Right ventricle myocardium inferior (tissue), 1 donor: ENCODE measurements at regions of chr6 and their contacts with region 1.

Region 1: GRCh38 chr6:125314019-125314581 is 12.3 kb upstream of the HDDC2 start:
- DNase-seq: peak; percentile 54
- ATAC-seq: peak; percentile 87

Region 2: GRCh38 chr6:125363039-125363823 is 49.1 kb after region 1 on chr6:
- intact Hi-C with region 1: loop called (anchors 2 kb)
- DNase-seq: peak; percentile 82
- ATAC-seq: peak; percentile 87

Region 3: DNA sequence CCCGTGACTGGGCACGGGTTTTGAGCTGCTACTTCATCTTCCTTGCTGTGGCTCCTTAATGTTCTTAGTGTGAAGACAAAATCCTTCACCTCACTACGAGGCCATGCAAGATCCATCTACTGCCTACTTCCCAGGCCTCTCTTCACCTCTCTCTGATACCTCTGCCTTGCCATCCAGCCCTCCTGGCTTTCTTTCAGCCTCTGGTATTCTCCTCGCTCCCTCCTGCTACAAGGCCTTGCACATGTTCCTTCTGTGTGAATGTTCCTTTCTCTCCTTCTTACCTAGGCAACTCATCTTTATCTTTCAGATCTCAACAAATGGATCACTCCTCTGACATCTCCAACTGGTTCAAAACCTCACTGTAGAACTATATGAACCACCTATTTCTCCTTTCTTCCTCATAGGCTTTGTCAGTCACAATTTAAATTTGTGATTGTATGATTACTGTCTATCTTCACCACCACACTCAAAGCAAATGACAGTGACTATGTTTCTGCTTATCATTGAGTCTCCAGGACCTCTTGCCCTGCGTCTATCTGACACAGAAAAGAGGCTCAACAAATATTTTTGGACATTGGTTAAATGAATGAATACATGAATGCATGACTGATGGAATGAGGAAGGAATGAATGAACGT is 455.2 kb after region 1 on chr6:
- intact Hi-C with region 1: loop called (anchors 1 kb)
- DNase-seq: no peak
- ATAC-seq: no peak

Region 4: DNA sequence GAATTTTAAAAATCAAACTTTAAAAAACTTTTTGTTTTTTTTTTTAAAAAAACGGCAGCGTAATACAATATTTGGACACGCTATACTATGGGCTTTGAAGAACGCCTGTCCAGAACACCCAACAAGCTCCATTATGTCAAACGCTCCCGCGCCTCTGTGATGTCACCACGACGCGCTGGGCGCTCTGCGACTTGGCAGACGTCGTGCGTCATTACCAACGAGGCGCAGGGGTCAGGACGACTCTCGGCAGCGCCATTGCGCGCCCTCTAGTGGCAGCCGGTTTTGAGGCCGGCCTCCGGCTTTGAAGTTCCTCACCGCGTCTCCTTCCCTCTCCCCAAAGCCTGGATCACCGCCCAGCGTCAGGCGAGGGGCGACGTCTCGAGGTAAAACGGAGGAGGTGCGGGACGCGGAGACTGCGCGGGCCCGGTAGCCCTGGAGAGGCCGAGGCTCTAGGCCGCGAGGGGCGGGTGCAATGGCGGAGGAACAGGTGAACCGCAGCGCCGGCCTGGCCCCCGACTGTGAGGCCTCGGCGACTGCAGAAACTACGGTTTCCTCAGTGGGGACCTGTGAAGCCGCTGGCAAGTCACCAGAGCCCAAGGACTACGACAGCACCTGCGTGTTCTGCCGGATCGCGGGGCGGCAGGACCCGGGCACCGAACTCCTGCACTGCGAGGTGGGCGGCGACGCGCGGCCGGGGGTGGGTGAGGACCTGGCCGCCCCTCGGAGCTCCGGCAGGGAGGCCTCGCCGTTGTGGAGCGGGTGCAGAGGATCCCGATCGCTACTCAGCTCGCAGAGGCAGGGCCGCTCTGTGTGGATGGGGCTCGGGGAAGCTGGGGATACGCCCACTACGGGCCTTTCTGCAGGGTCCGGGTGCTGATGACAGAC is 642.6 kb after region 1 on chr6 and contains the start of gene HINT3:
- intact Hi-C with region 1: loop called (anchors 1 kb)
- DNase-seq: peak; percentile 99
- ATAC-seq: peak; percentile 97
- total RNA-seq, gene HINT3: 34.8 TPM